ENCODE measurements at regions of chr9 and their contacts with region 1.

Region 1: GRCh38 chr9:129726322-129727160 is 26.3 kb downstream of the PTGES start:
- DNase-seq: peak; percentile 95
- H3K4me3 ChIP-seq: no peak overlapping the region
- H3K27ac ChIP-seq: peak overlapping the region; percentile 63
- H3K4me1 ChIP-seq: peaks cover 21% of the 10 kb centered on the region
- H3K27me3 ChIP-seq: no peaks in the 10 kb centered on the region
- CTCF ChIP-seq: peak; percentile 98

Region 2: DNA sequence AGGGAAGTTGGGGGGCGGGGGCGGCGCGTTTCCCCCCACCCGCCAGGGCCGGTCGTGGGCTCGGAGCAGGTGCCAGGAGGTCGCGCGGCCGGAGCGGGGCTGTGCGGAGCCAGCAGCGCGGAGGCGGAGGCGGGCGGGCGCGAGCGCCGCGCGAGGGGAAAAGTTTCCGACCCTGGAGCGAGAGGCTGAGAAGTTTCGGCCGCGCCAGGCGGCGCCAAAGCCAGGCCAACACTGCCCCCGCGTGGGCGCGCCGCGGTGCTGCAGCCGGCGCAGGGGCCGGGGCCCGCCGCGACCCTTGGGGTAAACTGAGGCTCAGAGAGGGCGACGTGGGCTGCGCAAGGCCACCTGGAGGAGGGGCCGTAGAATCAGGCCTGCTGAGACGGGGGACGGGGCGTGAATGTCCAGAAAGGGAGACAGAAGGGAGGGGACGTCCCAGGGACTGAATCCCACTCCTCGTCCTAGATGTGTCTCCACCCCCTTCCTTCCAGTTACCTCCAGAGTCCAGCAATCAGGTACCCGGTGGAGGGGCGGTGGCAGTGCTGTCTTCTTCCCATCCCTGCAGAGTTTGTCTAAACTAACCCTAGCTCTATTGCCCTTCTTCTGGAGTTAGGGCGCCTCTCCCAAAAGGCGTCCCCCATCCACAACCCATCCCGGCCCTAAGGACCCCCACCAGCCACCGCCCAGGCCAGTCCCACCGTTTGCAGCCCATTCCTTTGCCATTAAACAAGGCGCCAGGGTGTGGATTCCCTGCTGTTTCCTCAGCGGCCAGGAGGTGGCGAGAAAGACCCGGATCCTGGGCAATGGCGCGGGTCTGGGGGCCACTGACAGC is 115.9 kb before region 1 on chr9:
- CTCF ChIA-PET with region 1: no interaction called
- POLR2A ChIA-PET with region 1: no interaction called
- intact Hi-C with region 1: no loop called
- DNase-seq: peak; percentile 83
- H3K4me3 ChIP-seq: peak overlapping the region; percentile 81
- H3K27ac ChIP-seq: peak overlapping the region; percentile 88
- H3K4me1 ChIP-seq: peaks cover 46% of the 10 kb centered on the region
- H3K27me3 ChIP-seq: no peaks in the 10 kb centered on the region
- CTCF ChIP-seq: peak; percentile 62

Region 3: DNA sequence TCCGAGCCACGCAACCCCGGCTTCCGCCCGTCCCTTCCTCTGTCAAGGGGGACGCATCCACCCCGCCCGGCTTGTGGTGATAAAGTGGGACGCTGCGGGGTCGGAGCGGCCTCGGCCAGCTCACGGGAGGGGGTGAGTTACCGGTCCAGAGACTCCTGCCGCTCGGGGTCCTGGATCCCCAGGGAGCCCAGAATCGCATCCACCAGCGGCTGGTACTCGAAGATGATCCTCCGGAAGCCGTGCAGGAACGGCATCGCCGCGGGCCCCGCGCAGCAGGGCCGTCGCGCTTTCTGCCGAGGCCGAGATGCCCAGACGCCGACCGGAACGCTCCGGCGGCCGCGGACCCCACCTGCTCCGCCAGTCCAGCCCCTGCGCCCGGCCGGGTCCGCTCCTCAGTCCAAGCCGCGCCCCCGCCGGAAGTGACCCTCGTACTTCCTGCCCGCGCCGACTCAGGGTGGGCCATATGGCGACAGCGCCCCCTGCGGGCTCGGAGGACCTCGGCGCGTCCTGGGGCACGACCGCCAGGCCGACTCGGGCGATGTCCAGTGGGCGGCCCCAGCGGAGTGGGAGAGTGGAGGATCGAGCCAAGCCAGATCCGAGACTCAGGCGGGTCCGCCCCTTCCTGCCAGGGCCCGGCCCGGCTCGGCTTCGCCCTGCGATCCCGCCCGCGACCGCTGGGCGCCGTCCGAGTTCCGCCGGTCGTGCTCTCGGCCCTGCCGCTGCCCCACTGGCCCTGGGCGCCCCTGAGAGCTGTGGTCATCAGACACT is 84.6 kb before region 1 on chr9 and contains the start of gene ASB6:
- CTCF ChIA-PET with region 1: interaction called, 8 read pairs
- POLR2A ChIA-PET with region 1: no interaction called
- intact Hi-C with region 1: loop called (anchors 5 kb)
- DNase-seq: peak; percentile 92
- H3K4me3 ChIP-seq: peak within 1 kb of the TSS; percentile 91
- H3K27ac ChIP-seq: peak within 1 kb of the TSS; percentile 85
- H3K4me1 ChIP-seq: peaks cover 14% of the 10 kb centered on the region
- H3K27me3 ChIP-seq: no peaks in the 10 kb centered on the region
- CTCF ChIP-seq: peak; percentile 99
- total RNA-seq, gene ASB6: 30.4 and 36.5 TPM in 2 replicates

Region 4: GRCh38 chr9:129655696-129656095 is 70.8 kb before region 1 on chr9:
- CTCF ChIA-PET with region 1: interaction called, 16 read pairs
- POLR2A ChIA-PET with region 1: no interaction called
- intact Hi-C with region 1: no loop called
- DNase-seq: no peak
- H3K4me3 ChIP-seq: no peak overlapping the region
- H3K27ac ChIP-seq: no peak overlapping the region
- H3K4me1 ChIP-seq: peaks cover 17% of the 10 kb centered on the region
- H3K27me3 ChIP-seq: no peaks in the 10 kb centered on the region
- CTCF ChIP-seq: no peak

Region 5: DNA sequence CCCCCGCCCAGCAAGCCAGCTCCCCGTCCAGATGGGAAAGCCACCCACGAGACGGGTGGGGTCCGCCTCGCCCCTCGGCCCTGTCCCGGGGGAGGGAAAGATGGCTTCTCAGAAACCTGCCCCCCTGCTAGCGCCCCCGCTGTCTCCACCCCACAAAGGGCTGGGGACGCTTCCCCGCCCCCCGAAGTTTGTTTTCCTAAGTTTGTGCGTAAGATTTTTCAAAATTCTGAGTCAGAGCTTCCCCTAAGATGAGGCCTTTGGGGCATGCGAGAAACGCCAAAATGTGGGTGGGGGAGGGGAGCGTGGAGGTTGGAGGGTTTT is 28.9 kb before region 1 on chr9:
- CTCF ChIA-PET with region 1: interaction called, 13 read pairs
- POLR2A ChIA-PET with region 1: no interaction called
- intact Hi-C with region 1: no loop called
- DNase-seq: no peak
- H3K4me3 ChIP-seq: peak overlapping the region; percentile 47
- H3K27ac ChIP-seq: peak overlapping the region; percentile 85
- H3K4me1 ChIP-seq: peaks cover 22% of the 10 kb centered on the region
- H3K27me3 ChIP-seq: no peaks in the 10 kb centered on the region
- CTCF ChIP-seq: no peak

Region 6: GRCh38 chr9:129737479-129738274 is 11.1 kb after region 1 on chr9:
- CTCF ChIA-PET with region 1: interaction called, 21 read pairs
- POLR2A ChIA-PET with region 1: no interaction called
- intact Hi-C with region 1: no loop called
- DNase-seq: peak; percentile 90
- H3K4me3 ChIP-seq: peak overlapping the region; percentile 56
- H3K27ac ChIP-seq: peak overlapping the region; percentile 61
- H3K4me1 ChIP-seq: no peaks in the 10 kb centered on the region
- H3K27me3 ChIP-seq: no peaks in the 10 kb centered on the region
- CTCF ChIP-seq: peak; percentile 96

Region 7: GRCh38 chr9:129783516-129784361 is 57.2 kb after region 1 on chr9:
- CTCF ChIA-PET with region 1: interaction called, 9 read pairs
- POLR2A ChIA-PET with region 1: interaction called, 16 read pairs
- intact Hi-C with region 1: no loop called
- DNase-seq: peak; percentile 87
- H3K4me3 ChIP-seq: no peak overlapping the region
- H3K27ac ChIP-seq: no peak overlapping the region
- H3K4me1 ChIP-seq: no peaks in the 10 kb centered on the region
- H3K27me3 ChIP-seq: peaks cover 8% of the 10 kb centered on the region
- CTCF ChIP-seq: peak; percentile 93

Measured in A673 (cell line).